ENCODE measurements at regions of chr20 and their contacts with region 1.

Region 1: DNA sequence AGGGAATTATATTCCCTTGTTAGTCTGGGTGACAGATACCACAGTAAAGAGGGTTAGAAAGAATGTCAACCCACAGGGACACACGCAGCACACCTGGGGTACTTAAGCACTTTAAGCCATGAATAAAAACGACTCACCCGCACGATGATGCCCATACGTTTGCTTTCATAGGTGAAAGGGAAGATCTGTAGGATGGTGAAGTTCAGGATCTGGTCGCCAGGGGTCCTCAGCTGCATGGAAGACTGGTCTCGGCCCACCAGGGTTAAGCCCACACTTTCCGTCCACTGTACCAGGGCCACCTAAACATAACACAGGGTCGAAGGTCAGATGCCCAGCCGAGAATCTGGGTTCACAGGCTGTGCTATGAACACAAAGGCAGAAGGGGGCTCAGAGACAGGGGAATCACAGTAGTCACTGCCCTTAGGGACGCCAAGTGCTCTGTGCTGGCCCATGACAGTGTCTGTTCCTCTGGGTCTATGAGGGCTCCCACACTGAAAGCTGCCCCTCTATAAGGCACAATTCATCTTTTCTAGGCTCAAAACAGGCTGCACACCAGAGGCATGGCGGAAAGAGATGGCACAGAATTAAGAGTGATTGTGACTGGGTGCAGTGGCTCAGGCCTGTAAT is 96.8 kb upstream of the NFATC2 start:
- DNase-seq: peak; percentile 44 to 74 (median 52)
- ATAC-seq: peak; percentile 59 to 87 (median 78)
- H3K4me3 ChIP-seq: no peak overlapping the region
- H3K27ac ChIP-seq: no peak overlapping the region
- H3K4me1 ChIP-seq: peaks cover 0 to 8% (median under 1%) of the 10 kb centered on the region in 12 donors
- H3K27me3 ChIP-seq: no peaks in the 10 kb centered on the region
- CTCF ChIP-seq: peak; percentile 73 to 90 (median 84)
- POLR2A ChIP-seq: no peak

Region 2: DNA sequence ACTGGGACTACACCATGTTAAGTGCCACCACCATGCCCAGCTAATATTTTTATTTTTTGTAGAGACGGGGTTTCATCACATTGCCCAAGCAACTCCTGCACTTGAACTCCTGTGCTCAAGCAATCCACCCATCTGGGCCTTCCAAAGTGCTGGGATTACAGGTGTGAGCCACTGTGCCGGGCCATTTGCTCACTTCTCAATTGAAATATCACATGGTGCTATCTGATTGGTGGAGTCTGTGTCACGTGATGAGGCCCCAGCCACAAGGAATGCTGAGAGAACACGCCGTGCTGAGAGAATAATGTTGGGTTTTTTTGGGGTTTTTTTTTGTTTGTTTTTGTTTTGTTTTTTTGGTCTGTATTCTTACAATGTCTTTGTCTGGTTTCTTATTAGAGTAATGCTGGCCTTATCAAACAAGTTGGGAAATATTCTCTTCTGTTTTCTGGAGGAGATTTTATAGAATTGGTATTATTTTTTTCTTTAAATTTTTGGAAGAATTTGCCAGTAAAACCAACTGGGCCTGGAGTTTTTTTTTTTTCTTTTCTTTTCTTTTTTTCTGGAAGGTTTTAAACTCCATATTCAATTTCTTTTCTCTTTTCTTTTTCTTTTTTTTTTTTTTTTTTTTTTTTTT is 433.2 kb before region 1 on chr20:
- intact Hi-C with region 1: no loop called
- DNase-seq: no peak
- ATAC-seq: no peak
- H3K4me3 ChIP-seq: no peak overlapping the region
- H3K27ac ChIP-seq: no peak overlapping the region
- H3K4me1 ChIP-seq: no peaks in the 10 kb centered on the region
- H3K27me3 ChIP-seq: peaks cover 0 to 29% (median 4%) of the 10 kb centered on the region in 9 donors
- CTCF ChIP-seq: no peak
- POLR2A ChIP-seq: no peak

Region 3: DNA sequence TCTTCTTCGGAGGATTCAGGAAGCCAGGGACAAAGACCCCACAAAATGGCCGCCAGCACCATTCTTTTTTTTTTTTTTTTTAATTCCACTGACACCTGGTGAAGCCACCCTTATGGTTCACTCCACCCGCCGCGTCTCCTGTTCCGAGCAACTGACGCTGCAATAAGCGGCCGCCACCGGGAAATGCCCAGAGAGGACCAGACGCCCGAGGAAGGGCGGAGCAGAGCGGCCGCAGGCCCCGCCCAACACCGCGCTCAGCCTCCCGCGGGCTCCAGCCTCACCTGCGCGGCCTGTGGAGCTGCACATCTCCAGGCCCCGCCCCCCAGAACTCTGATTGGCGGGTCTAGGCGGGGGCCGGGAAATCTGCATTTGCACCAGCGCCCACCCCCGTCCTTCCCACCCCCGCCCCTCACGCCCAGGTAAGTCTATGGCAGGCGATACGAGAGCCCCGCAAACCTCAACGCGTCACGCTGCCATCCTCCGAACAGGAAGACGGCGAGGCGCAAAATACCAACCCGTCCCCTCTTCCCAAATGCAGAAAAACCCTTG is 127.8 kb after region 1 on chr20:
- intact Hi-C with region 1: loop called in 1 of 10 experiments (anchors 10 kb)
- DNase-seq: peak; percentile 53 to 85 (median 74)
- ATAC-seq: peak; percentile 69 to 96 (median 94)
- H3K4me3 ChIP-seq: peak overlapping the region; percentile 52 to 96 (median 90)
- H3K27ac ChIP-seq: peak overlapping the region in 6 of 12 donors; percentile 40 to 82 (median 66)
- H3K4me1 ChIP-seq: peaks cover 0 to 17% (median 0%) of the 10 kb centered on the region in 12 donors
- H3K27me3 ChIP-seq: peaks cover 0 to 19% (median 0%) of the 10 kb centered on the region in 9 donors
- CTCF ChIP-seq: no peak
- POLR2A ChIP-seq: no peak

Region 4: DNA sequence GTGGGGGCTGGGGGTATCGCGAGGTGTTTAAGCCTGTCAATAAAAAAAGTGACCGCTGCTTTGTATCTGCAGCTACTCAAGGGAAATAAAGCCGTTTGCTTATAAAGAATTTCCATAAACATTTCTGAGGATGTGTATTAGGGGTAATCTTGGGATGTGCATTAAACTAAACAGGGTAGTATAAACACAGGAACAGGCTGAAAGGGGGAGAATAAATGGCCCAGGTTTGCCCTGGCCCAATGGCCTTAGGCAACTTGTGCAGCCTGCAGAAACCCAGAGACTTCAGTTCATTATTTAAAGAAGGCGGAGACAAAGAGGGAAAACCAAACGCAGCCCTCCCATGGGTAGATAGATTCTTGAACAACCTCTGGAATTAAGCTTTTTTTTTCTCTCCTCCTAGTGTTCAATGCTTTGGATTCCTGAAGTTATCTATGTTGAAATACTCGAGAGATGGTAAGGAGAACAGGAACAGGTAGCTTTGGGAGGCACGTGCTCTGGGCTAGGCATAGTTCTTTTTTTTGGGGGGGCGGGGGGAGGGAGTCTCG is 198.6 kb after region 1 on chr20:
- intact Hi-C with region 1: no loop called
- DNase-seq: no peak
- ATAC-seq: no peak
- H3K4me3 ChIP-seq: no peak overlapping the region
- H3K27ac ChIP-seq: no peak overlapping the region
- H3K4me1 ChIP-seq: no peaks in the 10 kb centered on the region
- H3K27me3 ChIP-seq: no peaks in the 10 kb centered on the region
- CTCF ChIP-seq: no peak
- POLR2A ChIP-seq: no peak

Region 5: DNA sequence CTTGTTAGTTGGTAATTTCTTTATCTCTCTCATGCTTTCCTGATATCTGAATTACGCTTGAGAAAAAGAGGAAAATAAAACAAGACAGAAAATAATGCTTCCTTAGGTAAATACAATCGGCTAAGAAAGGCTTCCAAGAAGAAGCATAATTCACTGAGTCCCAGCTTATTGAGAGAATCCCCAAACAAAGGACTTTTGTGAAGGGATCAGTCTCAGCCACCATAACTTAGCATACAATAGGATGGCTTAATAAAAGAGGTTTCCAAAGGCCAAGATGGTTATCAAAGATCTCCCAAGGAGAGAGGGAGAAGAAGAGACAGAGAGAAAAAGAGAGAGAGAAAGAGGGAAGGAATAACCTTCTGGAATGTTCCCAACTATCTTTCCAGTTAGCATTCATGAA is 209.0 kb after region 1 on chr20:
- intact Hi-C with region 1: no loop called
- DNase-seq: no peak
- ATAC-seq: no peak
- H3K4me3 ChIP-seq: no peak overlapping the region
- H3K27ac ChIP-seq: no peak overlapping the region
- H3K4me1 ChIP-seq: no peaks in the 10 kb centered on the region
- H3K27me3 ChIP-seq: no peaks in the 10 kb centered on the region
- CTCF ChIP-seq: no peak
- POLR2A ChIP-seq: no peak

Region 6: DNA sequence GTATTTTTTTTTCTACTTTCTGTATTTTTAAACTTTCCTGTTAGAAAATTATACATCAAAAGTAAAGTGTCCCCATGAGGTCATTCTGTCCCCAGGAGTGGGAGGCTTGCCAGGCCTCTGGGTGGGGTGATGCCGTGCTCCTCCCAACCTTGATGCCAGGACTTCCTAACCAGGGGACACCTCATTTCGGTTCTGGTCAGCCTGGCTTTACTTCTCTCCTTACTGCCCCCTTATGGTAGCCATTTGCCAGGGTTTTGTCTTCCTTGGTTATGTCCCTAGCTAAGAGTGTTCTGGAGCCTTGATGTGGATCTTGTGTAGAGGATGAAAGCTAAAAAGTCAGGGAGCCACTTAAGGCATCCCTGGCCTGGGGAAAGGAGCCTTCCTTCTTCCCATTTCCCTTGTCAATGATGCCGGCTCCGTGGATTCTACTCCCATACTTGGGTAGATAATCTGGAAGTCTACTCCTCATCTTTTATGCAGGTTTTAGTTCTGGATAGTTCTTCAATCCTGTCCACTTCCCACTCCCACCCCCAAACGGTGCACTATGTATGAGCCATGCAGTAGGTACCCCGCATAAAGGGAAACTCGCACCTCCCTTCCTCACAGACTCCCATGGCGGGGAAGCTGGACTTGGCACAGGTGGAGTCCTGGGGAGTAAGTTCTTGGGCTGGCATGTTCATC is 327.1 kb after region 1 on chr20:
- intact Hi-C with region 1: loop called in 8 of 10 experiments (anchors 2 to 10 kb)
- DNase-seq: peak in 4 of 5 donors; percentile 27 to 34 (median 30)
- ATAC-seq: peak in 3 of 4 donors; percentile 55 to 75 (median 62)
- H3K4me3 ChIP-seq: no peak overlapping the region
- H3K27ac ChIP-seq: no peak overlapping the region
- H3K4me1 ChIP-seq: peaks cover 0 to 3% (median 0%) of the 10 kb centered on the region in 12 donors
- H3K27me3 ChIP-seq: peaks cover 0 to 9% (median 0%) of the 10 kb centered on the region in 9 donors
- CTCF ChIP-seq: peak; percentile 25 to 63 (median 46)
- POLR2A ChIP-seq: no peak

Region 7: GRCh38 chr20:52060794-52061714 is 421.7 kb after region 1 on chr20:
- intact Hi-C with region 1: loop called in 1 of 10 experiments (anchors 5 kb)
- DNase-seq: no peak
- ATAC-seq: peak in 3 of 4 donors; percentile 44 to 71 (median 51)
- H3K4me3 ChIP-seq: peak overlapping the region in 2 of 12 donors; percentile 5 to 18
- H3K27ac ChIP-seq: no peak overlapping the region
- H3K4me1 ChIP-seq: peaks cover 0 to 6% (median 0%) of the 10 kb centered on the region in 12 donors
- H3K27me3 ChIP-seq: no peaks in the 10 kb centered on the region
- CTCF ChIP-seq: peak in 10 of 12 donors; percentile 7 to 51 (median 36)
- POLR2A ChIP-seq: no peak

Region 8: DNA sequence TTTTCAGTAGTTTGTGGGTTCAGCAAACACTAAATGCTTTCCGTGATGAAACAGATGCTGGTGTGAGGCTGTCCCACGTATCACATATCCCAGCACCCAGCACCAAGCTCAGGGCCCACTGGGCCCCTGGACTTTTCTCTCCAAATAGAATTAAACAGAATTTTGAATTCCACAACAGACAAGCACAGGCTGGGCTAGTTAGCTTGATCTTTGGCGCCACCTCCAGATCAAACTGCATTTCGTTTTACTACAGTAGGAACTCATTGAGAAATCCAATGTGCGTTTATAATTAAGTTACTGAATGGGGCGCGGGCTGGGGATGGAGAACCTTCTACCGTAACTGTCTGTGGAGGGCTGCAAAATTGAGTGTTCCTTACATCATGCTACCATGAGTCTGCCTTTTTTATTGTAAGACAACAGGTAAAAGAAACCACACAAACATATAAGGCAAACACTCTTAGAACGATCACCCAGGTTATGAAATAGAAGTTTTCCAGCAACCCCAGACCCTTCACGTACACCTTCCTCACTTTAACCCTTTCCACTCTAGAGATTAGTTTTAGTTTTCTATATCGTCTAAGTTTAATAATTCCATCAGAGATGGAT is 444.4 kb after region 1 on chr20:
- intact Hi-C with region 1: loop called (anchors 1 to 5 kb)
- DNase-seq: peak in 2 of 5 donors; percentile 40 to 45
- ATAC-seq: peak in 3 of 4 donors; percentile 42 to 64 (median 56)
- H3K4me3 ChIP-seq: no peak overlapping the region
- H3K27ac ChIP-seq: no peak overlapping the region
- H3K4me1 ChIP-seq: no peaks in the 10 kb centered on the region
- H3K27me3 ChIP-seq: no peaks in the 10 kb centered on the region
- CTCF ChIP-seq: peak; percentile 29 to 71 (median 56)
- POLR2A ChIP-seq: no peak

Region 9: GRCh38 chr20:52145587-52145986 is 506.3 kb after region 1 on chr20:
- intact Hi-C with region 1: loop called in 2 of 10 experiments (anchors 5 kb)
- DNase-seq: no peak
- ATAC-seq: no peak
- H3K4me3 ChIP-seq: no peak overlapping the region
- H3K27ac ChIP-seq: no peak overlapping the region
- H3K4me1 ChIP-seq: peaks cover 0 to 6% (median 0%) of the 10 kb centered on the region in 12 donors
- H3K27me3 ChIP-seq: no peaks in the 10 kb centered on the region
- CTCF ChIP-seq: no peak
- POLR2A ChIP-seq: no peak

Region 10: GRCh38 chr20:52150440-52151258 is 511.3 kb after region 1 on chr20:
- intact Hi-C with region 1: loop called in 2 of 10 experiments (anchors 5 kb)
- DNase-seq: no peak
- ATAC-seq: no peak
- H3K4me3 ChIP-seq: no peak overlapping the region
- H3K27ac ChIP-seq: no peak overlapping the region
- H3K4me1 ChIP-seq: no peaks in the 10 kb centered on the region
- H3K27me3 ChIP-seq: no peaks in the 10 kb centered on the region
- CTCF ChIP-seq: peak; percentile 60 to 87 (median 75)
- POLR2A ChIP-seq: no peak